CD4-positive, alpha-beta memory T cell (primary cell): ENCODE measurements at regions of chr10 and their contacts with region 1.

Region 1: DNA sequence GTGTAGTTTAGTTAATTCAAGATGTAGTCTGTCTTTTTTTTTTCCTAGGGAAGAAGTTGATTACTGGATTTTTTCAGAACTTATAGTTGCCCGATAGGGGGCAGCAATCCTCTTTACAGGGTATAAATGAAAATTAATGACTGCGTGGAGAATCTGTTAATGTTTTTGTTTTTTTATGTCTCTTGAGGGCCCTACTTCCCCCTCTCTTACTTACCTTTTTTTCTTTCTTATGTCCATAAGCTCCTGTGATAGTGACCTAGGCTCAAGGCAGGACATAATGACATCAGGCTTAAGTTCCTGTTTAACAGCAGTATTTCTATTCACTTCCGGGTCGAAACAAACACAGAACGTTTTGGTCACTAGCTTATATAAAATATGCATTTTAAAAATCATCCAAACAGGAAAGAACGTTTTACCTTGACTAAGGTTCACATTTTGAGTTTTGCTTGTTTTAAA is 18.8 kb downstream of the CDC123 start:
- DNase-seq: peak; percentile 45 to 54 (median 53)
- H3K4me3 ChIP-seq: no peak overlapping the region
- H3K4me3 Mint-ChIP-seq: peak overlapping the region; percentile 48 to 79 (median 68)
- H3K27ac ChIP-seq: peak overlapping the region; percentile 22
- H3K27ac Mint-ChIP-seq: peak overlapping the region; percentile 45 to 94 (median 89)
- H3K4me1 ChIP-seq: peaks cover 6% of the 10 kb centered on the region
- H3K4me1 Mint-ChIP-seq: peaks cover 10 to 20% (median 16%) of the 10 kb centered on the region in 4 donors
- H3K27me3 ChIP-seq: no peaks in the 10 kb centered on the region
- H3K27me3 Mint-ChIP-seq: no peaks in the 10 kb centered on the region

Region 2: GRCh38 chr10:12091421-12091820 is 123.4 kb before region 1 on chr10:
- CTCF ChIA-PET with region 1: no interaction called
- POLR2A ChIA-PET with region 1: no interaction called
- intact Hi-C with region 1: no loop called
- DNase-seq: no peak
- H3K4me3 ChIP-seq: no peak overlapping the region
- H3K4me3 Mint-ChIP-seq: no peak overlapping the region
- H3K27ac ChIP-seq: no peak overlapping the region
- H3K27ac Mint-ChIP-seq: no peak overlapping the region
- H3K4me1 ChIP-seq: no peaks in the 10 kb centered on the region
- H3K4me1 Mint-ChIP-seq: peaks cover 0 to 2% (median 0%) of the 10 kb centered on the region in 4 donors
- H3K27me3 ChIP-seq: no peaks in the 10 kb centered on the region
- H3K27me3 Mint-ChIP-seq: no peaks in the 10 kb centered on the region

Region 3: DNA sequence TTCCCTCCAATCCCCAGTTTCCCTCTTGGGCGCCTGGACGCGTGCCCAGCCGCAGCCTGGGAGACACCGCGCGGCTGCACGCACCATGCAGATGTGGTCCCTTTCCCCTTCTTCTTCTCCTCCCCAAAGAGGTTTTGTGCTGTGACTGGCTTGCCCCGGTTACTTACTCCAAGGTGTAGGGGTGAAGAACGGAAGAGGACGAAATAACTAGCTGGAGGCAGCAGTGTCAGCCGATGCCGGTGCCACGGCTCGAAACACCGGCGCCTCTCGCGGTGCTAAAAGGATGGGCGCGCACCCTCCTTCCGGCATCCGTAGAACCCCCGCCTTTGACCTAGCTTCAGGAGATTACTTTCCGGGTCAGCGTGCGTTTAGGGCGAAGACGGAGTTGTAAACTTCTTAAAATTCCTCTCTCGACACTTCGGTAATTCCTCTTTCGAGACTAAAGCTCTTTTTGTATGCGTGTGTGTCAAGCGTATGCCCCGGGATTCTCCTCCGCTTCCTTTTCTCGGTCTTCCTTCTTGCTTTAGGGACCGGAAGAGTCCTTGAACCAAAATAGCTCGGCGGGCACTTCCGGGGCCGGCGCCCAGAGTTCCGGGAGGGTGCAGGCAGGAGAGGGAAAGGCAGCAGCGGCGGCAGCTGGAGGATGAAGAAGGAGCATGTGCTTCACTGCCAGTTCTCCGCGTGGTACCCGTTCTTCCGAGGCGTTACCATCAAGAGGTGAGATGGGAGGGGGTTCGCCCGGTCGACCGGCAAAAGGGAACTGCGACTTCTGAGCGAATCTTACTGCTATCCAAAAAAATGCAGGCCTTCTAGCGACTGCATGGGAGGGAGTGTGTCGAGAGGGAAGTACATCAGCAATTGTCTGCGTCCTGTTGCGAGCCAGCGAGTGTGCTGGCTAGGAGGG is 18.9 kb before region 1 on chr10 and contains the starts of genes CDC123 and NUDT5:
- CTCF ChIA-PET with region 1: interaction called, 31 read pairs
- POLR2A ChIA-PET with region 1: interaction called, 17 read pairs
- intact Hi-C with region 1: loop called (anchors 2 kb)
- DNase-seq: peak; percentile 85 to 89 (median 88)
- H3K4me3 ChIP-seq: peak within 1 kb of the TSS; percentile 78 to 93
- H3K4me3 Mint-ChIP-seq: peak within 1 kb of the TSS; percentile 95 to 99 (median 98)
- H3K27ac ChIP-seq: peak within 1 kb of the TSS; percentile 96
- H3K27ac Mint-ChIP-seq: peak within 1 kb of the TSS; percentile 97 to 100 (median 99)
- H3K4me1 ChIP-seq: peaks cover 43% of the 10 kb centered on the region
- H3K4me1 Mint-ChIP-seq: peaks cover 36 to 72% (median 54%) of the 10 kb centered on the region in 4 donors
- H3K27me3 ChIP-seq: no peaks in the 10 kb centered on the region
- H3K27me3 Mint-ChIP-seq: no peaks in the 10 kb centered on the region
- total RNA-seq, gene CDC123: 40.7 to 41.8 TPM
- total RNA-seq, gene NUDT5: 55.6 to 61.2 TPM

Region 4: GRCh38 chr10:12201543-12201942 is 13.2 kb before region 1 on chr10:
- CTCF ChIA-PET with region 1: interaction called, 31 read pairs
- POLR2A ChIA-PET with region 1: interaction called, 6 read pairs
- intact Hi-C with region 1: no loop called
- DNase-seq: no peak
- H3K4me3 ChIP-seq: no peak overlapping the region
- H3K4me3 Mint-ChIP-seq: peak overlapping the region in 7 of 8 donors; percentile 4 to 60 (median 35)
- H3K27ac ChIP-seq: no peak overlapping the region
- H3K27ac Mint-ChIP-seq: peak overlapping the region in 6 of 7 donors; percentile 22 to 77 (median 58)
- H3K4me1 ChIP-seq: peaks cover 37% of the 10 kb centered on the region
- H3K4me1 Mint-ChIP-seq: peaks cover 33 to 61% (median 43%) of the 10 kb centered on the region in 4 donors
- H3K27me3 ChIP-seq: no peaks in the 10 kb centered on the region
- H3K27me3 Mint-ChIP-seq: no peaks in the 10 kb centered on the region

Region 5: DNA sequence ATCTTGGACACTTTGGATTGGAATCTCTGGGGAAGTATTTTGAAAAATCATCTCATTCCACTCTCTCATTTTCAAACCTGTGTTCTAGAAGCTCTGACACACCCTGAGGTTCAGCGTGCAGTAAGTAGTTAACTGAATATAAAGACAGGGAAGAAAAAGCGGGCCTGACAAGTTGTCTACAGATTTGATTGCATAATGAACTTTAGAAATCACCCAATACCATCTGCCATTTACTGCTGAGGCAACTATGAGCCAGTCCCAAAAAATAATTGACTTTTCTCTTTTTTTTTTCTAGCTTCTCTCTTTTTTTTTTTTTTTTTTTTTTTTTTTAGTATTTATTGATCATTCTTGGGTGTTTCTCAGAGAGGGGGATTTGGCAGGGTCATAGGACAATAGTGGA is 10.7 kb after region 1 on chr10:
- CTCF ChIA-PET with region 1: interaction called, 22 read pairs
- POLR2A ChIA-PET with region 1: no interaction called
- intact Hi-C with region 1: no loop called
- DNase-seq: no peak
- H3K4me3 ChIP-seq: no peak overlapping the region
- H3K4me3 Mint-ChIP-seq: no peak overlapping the region
- H3K27ac ChIP-seq: no peak overlapping the region
- H3K27ac Mint-ChIP-seq: no peak overlapping the region
- H3K4me1 ChIP-seq: no peaks in the 10 kb centered on the region
- H3K4me1 Mint-ChIP-seq: peaks cover 0 to 8% (median 4%) of the 10 kb centered on the region in 4 donors
- H3K27me3 ChIP-seq: no peaks in the 10 kb centered on the region
- H3K27me3 Mint-ChIP-seq: no peaks in the 10 kb centered on the region

Region 6: GRCh38 chr10:12710594-12711349 is 496.0 kb after region 1 on chr10:
- CTCF ChIA-PET with region 1: interaction called, 54 read pairs
- POLR2A ChIA-PET with region 1: no interaction called
- intact Hi-C with region 1: loop called (anchors 1 kb)
- DNase-seq: peak; percentile 69 to 73 (median 70)
- H3K4me3 ChIP-seq: no peak overlapping the region
- H3K4me3 Mint-ChIP-seq: no peak overlapping the region
- H3K27ac ChIP-seq: no peak overlapping the region
- H3K27ac Mint-ChIP-seq: peak overlapping the region in 1 of 7 donors; percentile 57
- H3K4me1 ChIP-seq: peaks cover 4% of the 10 kb centered on the region
- H3K4me1 Mint-ChIP-seq: peaks cover 4 to 17% (median 7%) of the 10 kb centered on the region in 4 donors
- H3K27me3 ChIP-seq: no peaks in the 10 kb centered on the region
- H3K27me3 Mint-ChIP-seq: no peaks in the 10 kb centered on the region